Activated T-helper 1 cell treated with anti-CD3 and anti-CD28 coated beads, Interleukin-12 subunit alpha, Interleukin-12 subunit beta, Interleukin-2, Interleukin-4 antibody, amounts not matched to agents 30 ng/mL and 10 ng/mL and 1 ng/mL, durations not matched to agents 14 hours and 24 hours and 36 hours (primary cell): ENCODE measurements at regions of chr1 and their contacts with region 1.

Region 1: GRCh38 chr1:44775078-44775929 is at the start of gene RPS8:
- DNase-seq: peak; percentile 85
- H3K4me3 Mint-ChIP-seq: peak within 1 kb of the TSS; percentile 88
- H3K27ac Mint-ChIP-seq: peak within 1 kb of the TSS; percentile 93
- H3K4me1 Mint-ChIP-seq: peaks cover 23% of the 10 kb centered on the region
- H3K27me3 Mint-ChIP-seq: no peaks in the 10 kb centered on the region
- total RNA-seq, gene RPS8: 2,172 and 2,226 TPM in 2 replicates

Region 2: DNA sequence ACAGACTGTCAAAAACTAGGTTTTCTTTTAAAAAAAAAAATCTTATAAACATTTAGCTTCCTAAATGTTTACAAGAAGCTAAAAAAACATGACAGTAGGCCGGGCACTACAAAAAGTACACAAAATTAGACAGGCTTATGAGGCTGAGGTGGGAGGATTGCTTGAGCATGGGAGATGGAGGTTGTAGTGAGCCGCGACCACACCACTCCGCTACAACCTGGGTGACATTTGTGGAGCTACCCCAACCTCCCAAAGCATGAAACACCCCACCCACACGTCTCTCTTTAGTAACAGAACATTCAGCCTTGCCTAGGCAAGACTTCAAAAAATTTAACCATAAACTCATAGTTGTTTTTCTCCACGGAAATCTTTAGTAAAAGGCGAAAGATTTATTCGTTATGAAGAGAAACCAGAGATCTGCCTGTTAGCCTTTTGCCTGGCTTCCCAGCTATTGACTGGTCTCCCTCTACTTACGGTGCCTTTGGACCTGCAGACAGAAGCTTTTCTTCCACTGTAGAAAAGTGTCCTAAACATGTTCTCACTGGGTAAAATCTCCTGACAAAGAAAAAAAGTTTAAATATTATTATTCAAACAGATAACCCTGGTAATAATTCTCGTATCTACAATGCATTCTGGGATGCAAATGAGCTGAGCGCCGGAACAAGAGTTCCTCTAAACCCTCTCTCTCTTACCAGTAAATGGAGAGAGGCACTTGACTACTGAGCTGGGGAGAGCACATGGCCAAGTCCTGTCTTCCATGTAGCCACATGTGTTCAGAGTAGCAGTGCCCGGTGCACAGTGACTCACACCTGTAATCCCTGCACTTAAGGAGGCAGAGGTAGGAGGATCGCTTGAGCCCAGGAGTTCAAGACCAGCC is 53.6 kb before region 1 on chr1:
- intact Hi-C with region 1: loop called (anchors 2 kb)
- DNase-seq: peak; percentile 75
- H3K4me3 Mint-ChIP-seq: peak overlapping the region; percentile 77
- H3K27ac Mint-ChIP-seq: peak overlapping the region; percentile 97
- H3K4me1 Mint-ChIP-seq: peaks cover 71% of the 10 kb centered on the region
- H3K27me3 Mint-ChIP-seq: no peaks in the 10 kb centered on the region

Region 3: GRCh38 chr1:44786138-44786840 is 11.0 kb after region 1 on chr1:
- intact Hi-C with region 1: loop called (anchors 1 kb)
- DNase-seq: peak; percentile 66
- H3K4me3 Mint-ChIP-seq: peak overlapping the region; percentile 80
- H3K27ac Mint-ChIP-seq: peak overlapping the region; percentile 66
- H3K4me1 Mint-ChIP-seq: peaks cover 37% of the 10 kb centered on the region
- H3K27me3 Mint-ChIP-seq: no peaks in the 10 kb centered on the region

Region 4: DNA sequence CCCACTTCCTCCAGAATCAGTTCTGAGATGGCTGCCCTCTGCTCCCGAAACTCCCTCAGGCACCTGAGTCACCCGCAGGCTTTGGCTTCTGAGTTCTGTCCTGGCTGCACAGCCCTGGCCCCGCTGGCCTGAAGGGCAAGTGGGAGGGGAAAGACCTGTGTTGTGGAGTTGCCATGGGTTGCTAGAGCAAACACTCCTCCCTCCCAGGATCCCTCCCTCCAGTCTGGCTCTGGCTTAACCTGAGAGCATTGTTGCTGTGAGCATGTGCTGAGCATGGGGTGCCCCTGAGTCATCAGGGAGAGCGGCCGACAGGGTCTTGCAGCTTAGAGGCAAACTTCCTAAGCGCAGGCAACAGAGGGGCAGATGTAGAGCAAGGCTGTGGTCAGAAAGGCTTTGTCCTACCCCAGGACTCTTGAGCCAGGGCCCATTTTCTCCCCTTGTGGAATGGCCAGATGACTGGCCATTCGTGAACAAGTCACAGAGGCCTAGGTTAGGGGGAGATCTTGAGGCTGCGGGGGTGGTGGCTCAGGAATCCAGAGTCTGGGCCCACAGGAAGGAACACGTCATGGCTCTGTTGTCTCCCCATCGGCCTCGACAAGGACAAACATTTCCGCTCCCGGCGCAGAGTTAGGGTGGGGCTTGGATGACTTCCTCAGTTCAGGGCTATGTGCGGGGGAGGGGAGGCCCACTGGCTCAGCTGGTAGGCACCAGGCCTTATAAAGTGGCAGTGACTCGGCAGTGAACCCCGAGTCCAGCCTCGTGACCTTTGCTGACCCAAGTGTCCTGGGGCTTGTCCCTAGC is 32.2 kb after region 1 on chr1 and contains the start of gene DYNLT4:
- intact Hi-C with region 1: loop called (anchors 2 kb)
- DNase-seq: peak; percentile 84
- H3K4me3 Mint-ChIP-seq: peak within 1 kb of the TSS; percentile 68
- H3K27ac Mint-ChIP-seq: peak within 1 kb of the TSS; percentile 99
- H3K4me1 Mint-ChIP-seq: peaks cover 88% of the 10 kb centered on the region
- H3K27me3 Mint-ChIP-seq: no peaks in the 10 kb centered on the region
- total RNA-seq, gene DYNLT4: 0.44 TPM in 1 of 2 replicates, not detected in the other

Region 5: DNA sequence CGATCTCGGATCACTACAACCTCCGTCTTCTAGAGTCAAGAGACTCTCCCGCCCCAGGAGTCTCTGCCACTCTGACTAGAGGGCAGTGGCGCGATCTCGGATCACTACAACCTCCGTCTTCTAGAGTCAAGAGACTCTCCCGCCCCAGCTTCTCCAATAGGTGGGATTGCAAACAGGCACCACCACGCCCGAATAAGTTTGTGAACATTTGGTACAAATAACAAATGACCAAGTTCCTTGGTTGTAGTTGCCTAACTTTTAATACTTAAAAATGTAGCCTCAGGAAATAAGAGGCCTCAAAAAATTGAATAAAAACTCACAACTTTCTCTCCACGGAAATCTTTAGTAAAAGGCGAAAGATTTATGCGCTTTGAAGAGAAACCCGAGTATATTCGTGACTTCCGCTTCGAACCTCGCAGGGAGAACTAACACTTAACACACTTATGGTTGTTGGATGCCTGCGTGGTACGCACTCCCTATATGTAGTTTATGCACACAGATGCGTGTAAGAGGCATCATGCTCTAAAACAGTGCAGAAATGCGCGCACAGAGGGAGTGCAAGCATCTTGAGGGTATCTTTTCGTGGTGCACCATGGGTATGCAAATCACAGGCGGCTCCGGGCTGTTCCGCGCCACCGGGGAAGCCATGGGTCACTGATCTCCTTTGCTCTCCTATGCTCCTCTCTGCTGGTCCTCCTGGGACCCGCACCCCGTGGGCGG is 44.5 kb after region 1 on chr1:
- intact Hi-C with region 1: loop called (anchors 1 kb)
- DNase-seq: peak; percentile 81
- H3K4me3 Mint-ChIP-seq: peak overlapping the region; percentile 87
- H3K27ac Mint-ChIP-seq: peak overlapping the region; percentile 97
- H3K4me1 Mint-ChIP-seq: peaks cover 54% of the 10 kb centered on the region
- H3K27me3 Mint-ChIP-seq: no peaks in the 10 kb centered on the region

Region 6: GRCh38 chr1:45011837-45012638 is 236.7 kb after region 1 on chr1 and contains the start of gene UROD:
- intact Hi-C with region 1: no loop called
- DNase-seq: peak; percentile 86
- H3K4me3 Mint-ChIP-seq: peak within 1 kb of the TSS; percentile 84
- H3K27ac Mint-ChIP-seq: peak within 1 kb of the TSS; percentile 90
- H3K4me1 Mint-ChIP-seq: peaks cover 58% of the 10 kb centered on the region
- H3K27me3 Mint-ChIP-seq: no peaks in the 10 kb centered on the region
- total RNA-seq, gene UROD: 79.9 and 81.9 TPM in 2 replicates